Activated B cell treated with CpG ODN at 0.5 μM for 24 hours (primary cell): ENCODE measurements at regions of chr6 and their contacts with region 1.

Region 1: DNA sequence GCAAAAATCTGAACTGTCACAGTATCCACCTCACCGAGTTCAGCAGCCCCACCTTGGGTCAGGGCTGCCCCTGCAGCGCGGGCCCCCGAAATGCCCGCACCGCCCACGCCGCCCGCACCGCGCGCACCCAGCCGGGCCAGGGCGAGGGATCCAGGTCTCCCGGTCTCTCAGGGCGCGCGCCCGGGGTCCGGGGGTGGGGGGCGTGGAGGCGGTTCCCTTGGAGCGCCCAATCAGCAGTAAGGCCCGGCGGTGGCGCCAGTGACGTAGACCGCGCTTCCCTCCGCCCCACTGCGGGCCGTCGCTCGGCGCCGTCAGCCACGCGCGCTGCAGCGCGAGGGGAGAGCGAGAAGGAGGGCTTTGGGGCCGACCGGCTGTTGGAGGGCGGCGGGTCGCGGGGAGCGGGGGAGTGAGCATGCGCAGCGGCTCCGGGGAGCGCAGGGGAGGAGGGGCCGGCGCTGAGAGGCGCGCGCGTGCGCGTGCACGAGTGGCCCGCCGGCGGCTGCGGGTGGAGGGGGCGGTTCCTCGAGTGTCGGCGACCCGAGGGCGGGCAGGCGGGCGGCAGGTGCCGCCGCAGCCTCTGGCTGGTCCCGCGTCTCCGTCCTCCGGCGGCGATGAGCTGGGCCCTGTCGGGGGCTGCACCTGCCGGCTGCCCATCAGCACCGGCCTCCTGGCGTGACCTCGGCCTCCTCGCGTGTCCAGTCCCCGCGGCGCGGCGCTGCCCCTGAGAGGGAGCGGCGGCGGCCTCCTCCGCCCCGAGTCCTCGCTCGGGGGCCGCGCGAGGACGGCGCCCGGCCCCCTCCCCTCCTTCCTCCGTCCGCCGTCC is at the start of gene TMEM170B:
- DNase-seq: peak; percentile 99
- ATAC-seq: peak; percentile 94
- H3K4me3 Mint-ChIP-seq: peak within 1 kb of the TSS; percentile 84
- H3K27ac Mint-ChIP-seq: peak within 1 kb of the TSS; percentile 74
- H3K4me1 Mint-ChIP-seq: peaks cover 11% of the 10 kb centered on the region
- H3K27me3 Mint-ChIP-seq: no peaks in the 10 kb centered on the region
- CTCF ChIP-seq: no peak
- total RNA-seq, gene TMEM170B: 2.6 and 2.8 TPM in 2 replicates

Region 2: DNA sequence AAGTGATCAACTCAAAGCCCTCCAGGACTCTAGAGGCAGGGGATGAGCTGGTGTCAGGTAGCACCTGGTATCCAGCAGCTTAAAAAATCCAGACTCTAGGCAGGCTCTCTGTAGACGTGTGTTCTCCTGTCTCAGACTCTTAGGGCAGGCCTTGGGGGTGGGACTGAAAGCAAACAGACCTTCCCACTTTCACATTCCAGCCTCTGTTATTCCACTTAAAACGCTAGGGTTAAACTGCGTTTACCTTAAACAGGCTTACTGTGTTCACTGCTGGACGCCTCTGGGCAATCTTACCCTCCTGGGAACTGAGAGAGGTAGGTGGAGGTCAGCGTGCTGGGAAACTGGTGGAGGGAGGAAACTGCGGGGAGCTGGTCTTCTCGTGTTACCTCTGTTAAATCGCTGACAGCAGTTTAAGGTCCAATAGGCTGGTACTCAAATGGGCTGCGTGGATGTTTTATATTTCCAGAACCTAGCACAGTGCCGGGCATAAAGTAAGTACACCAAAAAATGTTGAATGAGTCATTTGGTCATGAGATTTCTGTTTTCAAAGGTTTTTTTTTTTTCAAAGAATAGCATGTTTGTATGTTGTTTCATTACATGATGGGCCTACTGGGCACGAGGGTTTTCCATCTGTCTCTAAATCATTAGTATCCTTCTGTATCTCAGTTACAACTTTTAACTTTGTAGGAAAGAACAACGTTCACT is 1016.2 kb before region 1 on chr6 and contains the start of gene GCNT2:
- CTCF ChIA-PET with region 1: no interaction called
- POLR2A ChIA-PET with region 1: no interaction called
- intact Hi-C with region 1: no loop called
- DNase-seq: no peak
- ATAC-seq: peak; percentile 38
- H3K4me3 Mint-ChIP-seq: peak within 1 kb of the TSS; percentile 51
- H3K27ac Mint-ChIP-seq: peak within 1 kb of the TSS; percentile 12
- H3K4me1 Mint-ChIP-seq: peaks cover 34% of the 10 kb centered on the region
- H3K27me3 Mint-ChIP-seq: no peaks in the 10 kb centered on the region
- CTCF ChIP-seq: no peak
- total RNA-seq, gene GCNT2: 23.2 and 25.9 TPM in 2 replicates

Region 3: DNA sequence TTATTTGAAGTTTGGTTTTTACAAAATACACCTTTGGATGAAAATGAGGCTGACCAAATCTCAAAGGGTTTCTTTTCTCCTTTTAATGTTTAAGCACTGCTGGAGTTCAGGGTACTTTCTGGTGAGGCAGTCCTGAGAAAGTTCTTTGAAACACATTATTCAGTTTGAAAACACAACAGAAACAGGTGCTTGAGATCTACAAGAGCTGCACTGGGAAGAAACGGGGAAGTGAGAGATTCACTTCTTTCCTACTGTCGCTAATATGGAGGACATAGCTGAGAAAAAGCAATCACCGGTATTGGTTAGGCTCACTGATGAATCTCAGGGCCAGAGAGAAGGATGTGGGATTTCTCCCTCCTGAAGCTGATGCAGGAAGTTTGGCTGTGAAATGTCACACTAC is 22.8 kb before region 1 on chr6:
- CTCF ChIA-PET with region 1: no interaction called
- POLR2A ChIA-PET with region 1: interaction called, 3 read pairs
- intact Hi-C with region 1: loop called (anchors 1 kb)
- DNase-seq: no peak
- ATAC-seq: peak; percentile 66
- H3K4me3 Mint-ChIP-seq: peak overlapping the region; percentile 49
- H3K27ac Mint-ChIP-seq: peak overlapping the region; percentile 81
- H3K4me1 Mint-ChIP-seq: peaks cover 40% of the 10 kb centered on the region
- H3K27me3 Mint-ChIP-seq: no peaks in the 10 kb centered on the region
- CTCF ChIP-seq: no peak

Region 4: DNA sequence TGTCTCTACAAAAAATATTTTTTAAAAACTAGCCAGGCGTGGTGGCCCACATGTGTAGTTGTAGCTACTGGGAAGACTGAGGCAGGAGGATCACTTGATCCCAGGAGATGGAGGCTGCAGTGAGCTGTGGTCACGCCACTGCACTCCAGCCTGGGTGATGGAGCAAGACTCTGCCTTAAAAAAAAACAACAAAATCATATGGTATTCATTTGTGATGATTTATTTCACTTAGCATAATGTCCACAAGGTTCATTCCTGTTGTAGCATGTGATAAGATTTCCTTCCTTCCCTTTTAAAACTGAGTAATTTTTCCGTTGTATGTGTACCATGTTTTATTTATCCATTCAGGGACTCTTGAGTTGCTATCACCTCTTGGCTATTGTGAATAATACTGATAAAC is 26.4 kb after region 1 on chr6:
- CTCF ChIA-PET with region 1: no interaction called
- POLR2A ChIA-PET with region 1: no interaction called
- intact Hi-C with region 1: no loop called
- DNase-seq: no peak
- ATAC-seq: no peak
- H3K4me3 Mint-ChIP-seq: no peak overlapping the region
- H3K27ac Mint-ChIP-seq: no peak overlapping the region
- H3K4me1 Mint-ChIP-seq: no peaks in the 10 kb centered on the region
- H3K27me3 Mint-ChIP-seq: no peaks in the 10 kb centered on the region
- CTCF ChIP-seq: no peak

Region 5: GRCh38 chr6:11869672-11870340 is 332.4 kb after region 1 on chr6:
- CTCF ChIA-PET with region 1: no interaction called
- POLR2A ChIA-PET with region 1: no interaction called
- intact Hi-C with region 1: no loop called
- DNase-seq: no peak
- ATAC-seq: no peak
- H3K4me3 Mint-ChIP-seq: no peak overlapping the region
- H3K27ac Mint-ChIP-seq: no peak overlapping the region
- H3K4me1 Mint-ChIP-seq: no peaks in the 10 kb centered on the region
- H3K27me3 Mint-ChIP-seq: no peaks in the 10 kb centered on the region
- CTCF ChIP-seq: no peak